Activated CD8-positive, alpha-beta T cell treated with anti-CD3 and anti-CD28 coated beads, Interleukin-2, amount 10 ng/mL, durations not matched to agents 7 days and 5 days (primary cell): ENCODE measurements at regions of chr17 and their contacts with region 1.

Region 1: DNA sequence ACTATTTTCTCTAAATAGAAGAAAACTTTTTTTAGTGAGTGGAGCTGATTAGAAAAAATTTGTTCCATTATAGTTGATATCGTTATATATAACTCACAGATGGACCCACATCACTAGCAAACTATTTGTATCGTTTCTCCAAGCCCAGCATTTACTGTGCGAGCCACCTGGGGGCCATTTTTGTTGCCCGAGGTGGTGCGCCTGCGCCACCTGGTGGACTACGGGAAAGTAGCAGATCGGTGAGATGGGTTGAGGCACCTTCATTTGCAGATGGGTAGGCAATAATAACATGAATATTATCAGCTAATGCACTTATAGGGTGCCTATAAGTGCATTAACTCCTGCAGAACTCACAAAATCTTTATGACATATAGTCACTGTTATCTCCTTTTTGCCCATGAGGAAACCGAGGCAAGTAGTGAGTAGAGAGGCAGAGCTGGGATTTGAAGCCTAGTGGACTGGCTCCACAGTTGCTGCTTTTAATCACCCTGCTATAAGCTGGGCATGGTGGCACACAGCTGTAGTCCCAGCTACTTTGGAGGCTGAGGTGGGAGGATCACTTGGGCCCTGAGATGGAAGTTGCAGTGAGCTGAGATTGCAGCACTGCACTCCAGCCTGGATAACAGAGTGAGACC is 23.2 kb upstream of the NTN1 start:
- DNase-seq: peak; percentile 85
- ATAC-seq: peak; percentile 82
- H3K4me3 Mint-ChIP-seq: no peak overlapping the region
- H3K27ac Mint-ChIP-seq: no peak overlapping the region
- H3K4me1 Mint-ChIP-seq: peaks cover 18% of the 10 kb centered on the region
- H3K27me3 Mint-ChIP-seq: peaks cover 32% of the 10 kb centered on the region

Region 2: GRCh38 chr17:8785547-8786413 is 212.3 kb before region 1 on chr17:
- CTCF ChIA-PET with region 1: interaction called, 16 read pairs
- POLR2A ChIA-PET with region 1: no interaction called
- DNase-seq: peak; percentile 71
- ATAC-seq: peak; percentile 55
- H3K4me3 Mint-ChIP-seq: no peak overlapping the region
- H3K27ac Mint-ChIP-seq: no peak overlapping the region
- H3K4me1 Mint-ChIP-seq: peaks cover 17% of the 10 kb centered on the region
- H3K27me3 Mint-ChIP-seq: peaks cover 15% of the 10 kb centered on the region

Region 3: DNA sequence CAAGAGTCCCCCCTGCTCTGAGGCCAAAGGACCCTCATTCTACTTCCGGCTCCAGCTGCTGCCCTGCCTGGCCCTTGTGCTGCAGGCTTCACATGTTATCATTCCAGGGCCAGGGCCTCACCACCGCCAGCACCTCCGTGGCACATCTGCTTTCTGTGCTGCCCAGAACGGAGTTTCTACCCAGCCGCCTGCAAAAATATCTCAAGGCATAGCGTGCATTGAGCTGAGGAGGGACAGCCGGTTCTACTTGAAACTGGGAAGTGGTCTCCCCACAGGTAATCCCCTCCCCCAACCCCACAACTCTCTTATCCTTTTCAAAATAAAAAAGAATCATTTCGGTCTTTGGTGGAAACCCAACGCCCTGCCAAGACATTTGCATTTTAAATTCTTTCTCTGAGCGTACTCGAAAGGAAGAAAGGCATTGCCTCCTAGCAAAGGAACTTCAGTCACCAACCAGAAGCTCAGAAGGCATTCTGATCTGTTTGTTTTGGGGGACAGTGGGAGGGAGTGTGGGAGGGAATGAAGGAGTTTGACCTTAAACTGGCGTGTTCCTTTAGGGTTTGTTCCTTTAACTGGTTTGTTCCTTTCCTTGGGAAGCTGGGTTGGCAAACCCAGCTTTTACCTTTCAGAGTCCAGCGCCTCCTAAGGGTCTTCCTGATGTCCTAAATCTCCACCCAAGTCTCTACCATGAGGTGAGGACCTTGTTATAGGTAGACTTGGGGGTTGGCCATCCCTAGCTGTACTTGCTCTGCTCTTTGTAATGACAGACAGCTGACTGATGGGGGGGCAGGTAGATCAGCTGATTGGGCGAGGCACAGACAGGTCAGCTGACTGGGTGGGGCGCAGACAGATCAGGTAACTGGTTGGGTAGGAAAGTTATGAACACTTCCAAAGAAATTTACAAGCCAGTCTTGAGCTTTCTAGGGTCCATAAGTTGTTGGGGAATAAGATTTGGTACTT is 97.2 kb before region 1 on chr17:
- CTCF ChIA-PET with region 1: interaction called, 43 read pairs
- POLR2A ChIA-PET with region 1: no interaction called
- DNase-seq: peak; percentile 63
- ATAC-seq: no peak
- H3K4me3 Mint-ChIP-seq: peak overlapping the region; percentile 49
- H3K27ac Mint-ChIP-seq: peak overlapping the region; percentile 96
- H3K4me1 Mint-ChIP-seq: peaks cover 70% of the 10 kb centered on the region
- H3K27me3 Mint-ChIP-seq: no peaks in the 10 kb centered on the region

Region 4: GRCh38 chr17:8976638-8977037 is 21.5 kb before region 1 on chr17:
- CTCF ChIA-PET with region 1: interaction called, 12 read pairs
- POLR2A ChIA-PET with region 1: no interaction called
- DNase-seq: no peak
- ATAC-seq: no peak
- H3K4me3 Mint-ChIP-seq: no peak overlapping the region
- H3K27ac Mint-ChIP-seq: no peak overlapping the region
- H3K4me1 Mint-ChIP-seq: peaks cover 10% of the 10 kb centered on the region
- H3K27me3 Mint-ChIP-seq: peaks cover 2% of the 10 kb centered on the region

Region 5: DNA sequence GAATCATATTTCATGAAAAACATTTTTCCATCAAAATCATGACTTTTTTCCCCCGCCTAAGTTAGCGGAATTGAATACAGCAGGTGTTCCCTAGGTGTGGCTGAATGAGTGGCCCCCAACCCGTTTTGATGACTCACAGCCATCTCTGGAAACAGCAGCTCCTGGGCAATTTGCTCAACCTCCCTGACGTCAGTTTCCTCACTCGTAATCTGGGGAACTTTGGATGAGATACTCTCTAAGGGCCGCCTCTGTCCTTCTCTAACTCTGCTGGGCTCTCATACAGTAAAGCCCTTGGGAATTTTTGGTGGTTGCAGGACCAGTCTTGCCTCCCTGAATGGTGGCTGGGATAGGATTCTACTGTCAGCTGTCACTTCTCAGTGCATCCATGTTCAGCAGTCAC is 11.6 kb after region 1 on chr17:
- CTCF ChIA-PET with region 1: interaction called, 15 read pairs
- POLR2A ChIA-PET with region 1: no interaction called
- DNase-seq: no peak
- ATAC-seq: no peak
- H3K4me3 Mint-ChIP-seq: no peak overlapping the region
- H3K27ac Mint-ChIP-seq: no peak overlapping the region
- H3K4me1 Mint-ChIP-seq: no peaks in the 10 kb centered on the region
- H3K27me3 Mint-ChIP-seq: peaks cover 65% of the 10 kb centered on the region

Region 6: GRCh38 chr17:9056566-9056965 is 58.5 kb after region 1 on chr17:
- CTCF ChIA-PET with region 1: no interaction called
- POLR2A ChIA-PET with region 1: no interaction called
- DNase-seq: no peak
- ATAC-seq: no peak
- H3K4me3 Mint-ChIP-seq: no peak overlapping the region
- H3K27ac Mint-ChIP-seq: no peak overlapping the region
- H3K4me1 Mint-ChIP-seq: no peaks in the 10 kb centered on the region
- H3K27me3 Mint-ChIP-seq: peaks cover 3% of the 10 kb centered on the region

Region 7: DNA sequence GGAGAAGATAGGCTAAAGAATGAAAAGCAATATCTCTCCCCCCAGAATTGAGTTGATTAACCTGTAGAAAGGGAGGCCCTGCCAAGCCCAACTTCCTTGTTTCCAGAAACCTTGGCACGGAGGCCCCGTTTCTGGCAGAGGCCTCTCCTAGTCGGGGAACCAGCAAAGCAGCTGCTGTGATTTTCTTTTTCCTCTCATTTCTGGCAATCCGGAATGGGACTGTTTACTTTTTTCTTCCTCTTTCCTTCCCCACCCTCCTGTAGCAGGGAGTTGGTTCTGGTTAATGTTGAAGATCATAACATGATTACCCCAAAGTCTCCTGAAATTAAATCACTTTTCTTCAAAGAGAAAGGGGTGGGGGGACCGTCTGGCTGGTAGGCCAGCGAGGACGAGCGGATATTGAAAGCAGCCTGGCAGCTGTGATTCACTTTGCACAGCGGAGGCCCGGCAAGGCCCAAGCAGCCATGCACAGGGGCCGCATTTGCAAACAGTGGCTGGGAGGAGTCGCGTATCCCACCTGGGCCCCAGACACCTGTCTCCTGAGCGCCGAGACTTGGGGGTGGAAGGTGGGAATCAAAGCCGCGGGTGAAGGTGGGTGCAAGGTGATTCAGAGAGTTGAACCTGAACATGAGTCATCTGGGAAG is 74.7 kb after region 1 on chr17:
- CTCF ChIA-PET with region 1: no interaction called
- POLR2A ChIA-PET with region 1: no interaction called
- DNase-seq: no peak
- ATAC-seq: no peak
- H3K4me3 Mint-ChIP-seq: no peak overlapping the region
- H3K27ac Mint-ChIP-seq: no peak overlapping the region
- H3K4me1 Mint-ChIP-seq: no peaks in the 10 kb centered on the region
- H3K27me3 Mint-ChIP-seq: peaks cover 4% of the 10 kb centered on the region

Region 8: GRCh38 chr17:9120471-9120870 is 122.4 kb after region 1 on chr17:
- CTCF ChIA-PET with region 1: no interaction called
- POLR2A ChIA-PET with region 1: no interaction called
- DNase-seq: peak; percentile 24
- ATAC-seq: no peak
- H3K4me3 Mint-ChIP-seq: no peak overlapping the region
- H3K27ac Mint-ChIP-seq: no peak overlapping the region
- H3K4me1 Mint-ChIP-seq: peaks cover 4% of the 10 kb centered on the region
- H3K27me3 Mint-ChIP-seq: peaks cover 6% of the 10 kb centered on the region